ENCODE measurements at regions of chr14 and their contacts with region 1.

Region 1: DNA sequence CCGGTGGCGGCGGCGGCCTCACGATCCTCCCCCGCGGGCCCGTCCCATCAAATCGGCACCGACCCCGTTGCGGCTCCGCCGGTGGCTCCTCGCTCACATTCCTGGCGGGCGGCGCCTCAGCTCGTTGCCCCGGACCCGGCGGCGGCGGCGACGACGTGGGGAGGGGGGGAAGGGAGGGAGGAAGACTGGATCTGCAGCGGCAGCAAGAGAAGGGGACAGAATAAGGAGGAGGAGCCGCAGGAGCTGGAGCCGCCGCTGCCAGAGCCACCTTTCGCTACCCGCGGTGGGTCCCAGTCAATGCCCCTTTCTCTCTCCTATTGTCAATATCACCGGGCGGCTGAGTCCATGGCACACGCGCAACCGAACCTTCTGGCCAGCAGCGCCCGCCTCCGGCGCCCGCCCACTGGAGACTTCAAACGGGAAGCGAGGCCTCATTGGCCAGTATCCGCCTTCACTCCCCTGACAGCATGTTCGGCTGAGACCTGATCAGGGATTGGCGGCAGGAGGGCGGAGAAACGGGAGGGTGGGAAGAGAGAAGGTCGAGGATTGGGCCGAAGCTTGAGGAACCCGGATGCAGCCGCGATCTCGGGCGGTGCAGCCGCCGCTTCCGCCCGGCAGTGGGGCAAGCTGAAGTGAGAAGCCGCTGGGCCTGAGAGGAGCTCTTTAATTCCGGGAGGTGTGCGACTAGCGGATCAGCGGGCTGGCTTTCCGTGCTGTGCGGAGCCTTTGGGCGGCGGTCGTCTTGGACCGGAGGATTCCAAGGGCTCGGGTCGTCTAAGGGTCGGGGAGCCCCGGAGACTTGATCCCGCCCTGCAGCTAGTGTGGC is at the start of gene PPP2R5E:
- DNase-seq: peak; percentile 95 to 99 (median 99)
- H3K4me3 ChIP-seq: peak within 1 kb of the TSS; percentile 66 to 99 (median 94)
- H3K27ac ChIP-seq: peak within 1 kb of the TSS; percentile 67 to 97 (median 92)
- H3K27me3 ChIP-seq: no peaks in the 10 kb centered on the region
- CTCF ChIP-seq: peak in 41 of 56 donors; percentile 6 to 64 (median 31)
- total RNA-seq, gene PPP2R5E: 33.6 to 65.9 (median 50.8) TPM

Region 2: GRCh38 chr14:63388763-63389431 is 154.3 kb before region 1 on chr14:
- intact Hi-C with region 1: loop called (anchors 2 to 5 kb)
- DNase-seq: peak in 8 of 10 donors; percentile 31 to 73 (median 53)
- H3K4me3 ChIP-seq: no peak overlapping the region
- H3K27ac ChIP-seq: no peak overlapping the region
- H3K27me3 ChIP-seq: no peaks in the 10 kb centered on the region
- CTCF ChIP-seq: peak in 55 of 56 donors; percentile 51 to 94 (median 77)

Region 3: GRCh38 chr14:63432228-63432627 is 111.0 kb before region 1 on chr14:
- intact Hi-C with region 1: loop called in 1 of 2 experiments (anchors 5 kb)
- DNase-seq: no peak
- H3K4me3 ChIP-seq: peak overlapping the region in 24 of 59 donors; percentile 0 to 40 (median 18)
- H3K27ac ChIP-seq: peak overlapping the region in 46 of 59 donors; percentile 0 to 83 (median 47)
- H3K27me3 ChIP-seq: no peaks in the 10 kb centered on the region
- CTCF ChIP-seq: no peak

Region 4: GRCh38 chr14:63573581-63573980 is 30.4 kb after region 1 on chr14:
- intact Hi-C with region 1: no loop called
- DNase-seq: no peak
- H3K4me3 ChIP-seq: no peak overlapping the region
- H3K27ac ChIP-seq: no peak overlapping the region
- H3K27me3 ChIP-seq: no peaks in the 10 kb centered on the region
- CTCF ChIP-seq: no peak

Region 5: GRCh38 chr14:63598807-63599206 is 55.6 kb after region 1 on chr14:
- intact Hi-C with region 1: loop called in 1 of 2 experiments (anchors 10 kb)
- DNase-seq: peak in 3 of 10 donors; percentile 34 to 63 (median 53)
- H3K4me3 ChIP-seq: peak overlapping the region in 25 of 59 donors; percentile 1 to 52 (median 15)
- H3K27ac ChIP-seq: peak overlapping the region in 44 of 59 donors; percentile 7 to 87 (median 60)
- H3K27me3 ChIP-seq: no peaks in the 10 kb centered on the region
- CTCF ChIP-seq: peak in 1 of 56 donors; percentile 12

Region 6: GRCh38 chr14:63641473-63642228 is 98.4 kb after region 1 on chr14 and contains the start of gene WDR89:
- intact Hi-C with region 1: loop called (anchors 1 to 2 kb)
- DNase-seq: peak; percentile 93 to 99 (median 99)
- H3K4me3 ChIP-seq: peak within 1 kb of the TSS; percentile 57 to 98 (median 87)
- H3K27ac ChIP-seq: peak within 1 kb of the TSS; percentile 76 to 100 (median 96)
- H3K27me3 ChIP-seq: no peaks in the 10 kb centered on the region
- CTCF ChIP-seq: peak in 54 of 56 donors; percentile 19 to 70 (median 50)
- total RNA-seq, gene WDR89: 9.3 to 21.4 (median 15.0) TPM

Region 7: DNA sequence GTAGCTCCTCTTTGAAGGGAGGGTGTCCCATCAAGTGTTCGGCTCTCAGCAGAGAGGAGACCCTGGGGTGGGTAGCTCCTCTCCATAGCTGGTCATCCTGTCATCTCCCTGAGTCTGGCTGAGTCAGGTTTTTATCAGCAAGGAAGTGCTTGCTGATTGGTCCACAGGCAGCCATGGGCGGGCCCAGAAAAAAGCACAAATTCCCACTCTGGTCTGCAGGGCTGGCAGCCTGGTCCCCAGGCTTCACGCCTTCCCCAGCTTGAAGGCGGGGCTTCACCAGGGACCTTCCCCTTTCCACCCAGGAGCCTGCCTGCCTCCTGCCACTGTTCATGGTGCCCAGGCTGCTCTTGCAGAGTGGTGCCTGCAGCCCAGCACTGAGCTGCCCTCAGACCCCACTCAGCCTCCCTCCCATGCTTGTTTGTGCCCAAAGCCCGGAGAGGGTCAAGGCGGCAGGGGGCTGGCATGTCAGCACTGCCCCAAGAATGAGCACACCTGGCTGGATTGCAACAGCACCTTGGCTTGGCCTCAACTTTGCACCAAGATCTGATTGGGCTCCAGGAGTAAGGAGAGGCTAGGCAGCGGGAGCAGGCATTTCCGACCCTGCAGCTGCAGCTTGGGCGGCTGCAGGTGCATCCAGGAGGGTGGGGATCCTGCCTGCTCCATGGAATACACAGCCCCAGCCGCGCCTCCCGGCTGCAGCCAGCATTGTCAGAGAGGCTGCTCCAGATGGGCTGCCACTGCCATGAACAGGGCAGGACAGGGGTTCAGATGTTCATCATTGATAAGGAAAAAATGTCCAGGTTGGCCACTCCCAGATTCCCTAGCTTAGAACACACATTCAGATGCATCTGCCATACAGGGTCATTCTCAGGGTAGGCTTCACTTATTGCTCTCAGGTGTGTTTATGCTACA is 120.5 kb after region 1 on chr14:
- intact Hi-C with region 1: loop called in 1 of 2 experiments (anchors 5 kb)
- DNase-seq: no peak
- H3K4me3 ChIP-seq: no peak overlapping the region
- H3K27ac ChIP-seq: no peak overlapping the region
- H3K27me3 ChIP-seq: no peaks in the 10 kb centered on the region
- CTCF ChIP-seq: no peak

Region 8: DNA sequence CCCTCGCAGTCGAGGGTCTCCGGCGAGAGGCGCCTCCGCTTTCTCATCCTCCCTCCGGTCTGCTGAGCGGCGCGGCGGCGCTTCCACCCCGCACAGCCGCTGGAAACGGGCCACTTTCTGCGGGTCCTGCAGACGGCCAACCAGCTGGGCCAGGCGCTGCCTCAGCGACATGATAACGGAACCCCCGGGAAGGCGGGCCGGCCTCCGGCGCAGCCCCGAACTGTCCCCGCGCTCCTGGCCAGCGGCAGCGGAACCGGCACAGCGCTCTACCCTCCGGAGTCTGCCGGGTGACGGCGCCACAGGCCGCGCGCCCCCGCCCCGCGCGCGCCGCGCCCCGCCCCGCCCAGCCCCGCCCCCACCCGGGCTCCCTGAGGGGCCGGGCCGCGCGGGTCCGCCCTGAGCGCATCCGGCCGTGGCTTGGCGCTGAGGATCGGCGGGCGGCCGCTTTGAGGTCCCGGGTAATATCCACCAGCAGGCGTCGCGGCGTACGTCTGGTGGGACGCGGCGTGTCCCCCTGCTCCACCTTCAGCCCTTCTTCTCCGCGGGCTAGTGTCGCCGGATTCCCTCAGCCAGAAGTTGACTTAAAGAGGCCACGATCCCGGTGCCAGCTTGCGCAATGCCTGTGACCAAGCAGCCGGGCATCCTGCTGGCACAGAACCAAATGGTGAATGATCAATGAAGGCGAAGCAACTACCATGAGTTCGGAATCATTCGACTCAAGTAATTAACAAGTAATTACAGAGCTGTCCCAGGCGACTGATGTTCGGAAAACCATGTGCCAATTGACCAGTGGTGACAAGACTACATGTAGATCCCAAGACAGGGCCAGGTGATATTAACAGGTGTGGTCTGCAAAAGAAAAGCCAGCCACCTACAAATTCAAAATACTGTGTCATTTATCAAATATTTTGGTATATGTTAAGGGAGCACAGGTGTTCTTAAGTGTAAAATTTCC is 184.8 kb after region 1 on chr14 and contains the start of gene SGPP1:
- intact Hi-C with region 1: loop called (anchors 2 to 5 kb)
- DNase-seq: peak; percentile 41 to 79 (median 61)
- H3K4me3 ChIP-seq: peak within 1 kb of the TSS; percentile 70 to 98 (median 91)
- H3K27ac ChIP-seq: peak within 1 kb of the TSS; percentile 63 to 97 (median 90)
- H3K27me3 ChIP-seq: no peaks in the 10 kb centered on the region
- CTCF ChIP-seq: peak in 47 of 56 donors; percentile 13 to 62 (median 41)
- total RNA-seq, gene SGPP1: 16.0 to 26.2 (median 20.9) TPM